ENCODE measurements at regions of chr19 and their contacts with region 1.

Region 1: DNA sequence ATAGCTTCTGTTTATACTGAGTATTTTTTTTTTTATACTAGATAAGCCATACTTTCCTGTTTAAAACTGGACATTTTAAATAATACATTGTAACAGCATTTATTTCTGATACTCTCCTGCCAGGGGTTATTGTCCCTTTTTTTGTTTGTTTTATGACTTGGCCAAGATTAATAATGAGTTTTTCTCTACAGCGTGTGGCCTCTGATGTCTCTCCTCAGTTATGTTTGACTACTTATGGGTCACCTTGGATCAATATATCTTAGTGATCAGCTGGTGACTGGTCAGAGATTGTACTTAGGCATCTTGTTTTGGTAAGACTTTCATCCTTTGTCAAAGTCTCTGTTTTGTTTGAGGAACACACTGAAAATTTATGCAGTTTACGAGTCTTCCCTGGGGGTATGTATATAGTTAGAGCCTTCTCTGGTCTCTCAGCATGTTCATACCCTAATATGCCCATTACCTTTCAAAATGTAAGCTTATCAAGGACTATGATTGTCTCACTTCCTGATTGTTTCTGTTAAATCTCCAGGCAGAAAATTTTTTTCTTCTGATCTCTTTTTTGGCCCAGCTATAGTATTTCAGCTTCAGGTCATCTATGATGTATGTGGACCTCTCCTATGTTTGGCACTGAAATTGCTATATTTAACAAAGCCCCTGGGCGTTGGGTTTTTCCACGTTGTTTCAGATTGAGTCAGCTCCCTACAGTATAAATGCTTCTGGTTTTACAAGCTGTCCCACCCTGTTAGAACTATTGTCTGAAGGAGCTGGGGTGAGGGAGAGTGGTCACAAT is 87.9 kb downstream of the URI1 start:
- DNase-seq: no peak
- ATAC-seq: peak; percentile 83
- H3K4me3 Mint-ChIP-seq: peak overlapping the region; percentile 12
- H3K27ac Mint-ChIP-seq: peak overlapping the region; percentile 42
- H3K4me1 Mint-ChIP-seq: peaks cover 16% of the 10 kb centered on the region
- H3K27me3 Mint-ChIP-seq: no peaks in the 10 kb centered on the region
- CTCF ChIP-seq: no peak

Region 2: DNA sequence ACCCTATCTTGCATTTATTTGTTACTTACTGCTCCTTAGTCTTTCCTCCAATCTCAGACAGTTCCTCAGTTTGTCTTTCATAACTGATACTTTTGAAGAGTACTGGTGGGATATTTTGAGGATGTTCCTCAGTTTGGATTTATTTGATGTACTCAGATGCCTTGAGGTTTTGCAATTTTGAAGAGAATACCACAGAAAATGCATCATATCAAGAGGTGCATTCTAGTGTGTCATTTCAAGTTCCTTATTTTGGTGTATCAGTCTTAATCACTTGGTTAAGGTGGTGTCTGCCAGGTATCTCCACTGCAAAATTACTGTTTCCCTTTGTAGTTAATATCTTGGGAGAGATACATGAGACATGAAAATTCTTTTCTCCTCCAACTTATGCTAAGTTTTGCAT is 12.7 kb before region 1 on chr19:
- CTCF ChIA-PET with region 1: no interaction called
- POLR2A ChIA-PET with region 1: no interaction called
- intact Hi-C with region 1: loop called (anchors 2 kb)
- DNase-seq: no peak
- ATAC-seq: peak; percentile 76
- H3K4me3 Mint-ChIP-seq: no peak overlapping the region
- H3K27ac Mint-ChIP-seq: no peak overlapping the region
- H3K4me1 Mint-ChIP-seq: peaks cover 13% of the 10 kb centered on the region
- H3K27me3 Mint-ChIP-seq: no peaks in the 10 kb centered on the region
- CTCF ChIP-seq: no peak